ENCODE measurements at regions of chr2 and their contacts with region 1.

Region 1: DNA sequence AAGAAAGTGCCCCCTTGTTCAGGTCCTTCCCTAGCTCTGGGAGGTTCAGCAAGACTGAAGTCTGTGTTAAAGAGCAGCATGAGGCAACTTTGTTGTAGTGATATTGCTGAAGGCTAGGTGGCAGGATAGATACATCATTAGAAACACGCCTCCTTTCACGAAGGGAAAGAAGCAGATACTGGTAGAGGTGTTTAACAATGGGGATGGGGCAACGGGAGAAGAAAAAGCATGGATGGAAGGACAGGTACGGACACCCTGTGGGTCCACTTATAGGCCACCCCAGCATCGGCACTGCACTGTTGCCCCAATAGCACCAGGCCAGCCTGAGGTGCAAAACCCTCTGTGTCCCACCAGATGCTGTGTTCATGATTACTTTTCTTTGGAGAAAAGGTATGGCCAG is 3.5 kb upstream of the IGFBP5 start:
- DNase-seq: peak; percentile 15

Region 2: DNA sequence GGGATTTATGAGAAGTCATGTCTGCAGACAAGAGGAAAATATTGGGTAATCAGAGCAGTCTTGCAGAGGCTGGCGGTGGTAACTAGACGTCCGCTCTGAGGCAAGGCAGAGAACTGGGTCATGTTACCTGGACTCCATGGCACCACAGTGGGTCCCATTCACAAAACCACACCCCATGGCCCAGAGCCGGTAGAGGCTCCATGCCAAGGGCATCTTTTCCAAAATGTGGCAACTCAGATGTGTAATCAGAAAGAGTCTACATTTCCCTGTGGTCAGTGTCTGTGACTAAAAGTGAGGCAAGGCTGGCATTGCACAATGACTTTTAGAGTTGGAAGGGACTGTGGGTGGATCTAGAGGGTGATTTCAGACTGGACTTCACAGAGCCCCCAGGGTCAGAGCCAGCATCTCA is 798.7 kb before region 1 on chr2:
- intact Hi-C with region 1: no loop called
- DNase-seq: no peak

Region 3: GRCh38 chr2:216880509-216881184 is 181.8 kb after region 1 on chr2:
- intact Hi-C with region 1: loop called (anchors 5 kb)
- DNase-seq: no peak

Region 4: GRCh38 chr2:217054791-217055190 is 355.9 kb after region 1 on chr2:
- intact Hi-C with region 1: loop called (anchors 5 kb)
- DNase-seq: no peak

Region 5: GRCh38 chr2:217277646-217278398 is 578.9 kb after region 1 on chr2:
- intact Hi-C with region 1: loop called (anchors 5 kb)
- DNase-seq: no peak

Region 6: DNA sequence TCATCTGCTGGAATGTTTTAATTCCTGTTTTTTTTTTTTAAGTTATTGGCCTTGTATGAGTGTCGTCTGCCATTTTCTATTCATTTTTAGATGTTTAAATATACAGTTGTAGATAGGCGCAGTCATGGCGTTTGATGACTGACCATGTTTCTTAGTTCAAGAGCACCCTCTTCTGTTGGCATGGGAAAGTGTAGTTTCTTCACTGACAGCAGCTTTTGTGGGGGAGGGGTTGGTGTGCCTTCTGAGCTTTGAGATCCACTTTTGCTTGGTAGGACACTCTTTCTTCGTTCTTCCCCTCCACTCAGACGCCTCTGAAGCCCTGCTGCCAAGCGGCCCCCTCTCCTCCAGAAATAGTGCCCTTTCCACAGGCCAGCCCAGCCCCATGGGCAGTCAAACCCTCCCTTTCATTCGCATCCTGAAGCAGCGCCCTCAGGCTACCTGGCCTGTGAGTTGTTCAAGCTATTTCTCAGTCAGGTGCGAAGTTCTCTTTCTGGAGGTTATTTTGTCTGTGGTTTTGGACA is 811.9 kb after region 1 on chr2:
- intact Hi-C with region 1: loop called (anchors 5 kb)
- DNase-seq: no peak

Measured in cardiac septum (tissue), 1 donor.